SK-N-SH (cell line): ENCODE measurements at regions of chr5 and their contacts with region 1.

Region 1: GRCh38 chr5:32585446-32586275 is at the start of gene SUB1:
- DNase-seq: peak; percentile 96
- H3K4me3 ChIP-seq: peak within 1 kb of the TSS; percentile 78
- H3K27ac ChIP-seq: peak within 1 kb of the TSS; percentile 92 to 99
- H3K4me1 ChIP-seq: peaks cover 5 to 7% of the 10 kb centered on the region in 2 experiments; a peak in 3 of 4 replicates
- H3K27me3 ChIP-seq: no peaks in the 10 kb centered on the region
- CTCF ChIP-seq: peak; percentile 29; the same call in 1 of the 2 replicates
- EP300 ChIP-seq: no peak; a peak in 1 of 4 replicates
- RAD21 ChIP-seq: no peak
- polyA plus RNA-seq, gene SUB1: 50.8 and 55.4 TPM in 2 replicates

Region 2: GRCh38 chr5:32471784-32472183 is 113.9 kb before region 1 on chr5:
- CTCF ChIA-PET with region 1: interaction called, 20 read pairs
- POLR2A ChIA-PET with region 1: no interaction called
- DNase-seq: peak; percentile 21
- H3K4me3 ChIP-seq: no peak overlapping the region
- H3K27ac ChIP-seq: no peak overlapping the region
- H3K4me1 ChIP-seq: no peaks in the 10 kb centered on the region
- H3K27me3 ChIP-seq: no peaks in the 10 kb centered on the region; the same call in 1 of the 2 replicates
- CTCF ChIP-seq: no peak
- EP300 ChIP-seq: no peak
- RAD21 ChIP-seq: peak; percentile 61

Region 3: GRCh38 chr5:32482193-32482592 is 103.5 kb before region 1 on chr5:
- CTCF ChIA-PET with region 1: interaction called, 183 read pairs
- POLR2A ChIA-PET with region 1: no interaction called
- DNase-seq: no peak
- H3K4me3 ChIP-seq: no peak overlapping the region
- H3K27ac ChIP-seq: no peak overlapping the region
- H3K4me1 ChIP-seq: no peaks in the 10 kb centered on the region
- H3K27me3 ChIP-seq: no peaks in the 10 kb centered on the region
- CTCF ChIP-seq: no peak
- EP300 ChIP-seq: no peak
- RAD21 ChIP-seq: no peak

Region 4: DNA sequence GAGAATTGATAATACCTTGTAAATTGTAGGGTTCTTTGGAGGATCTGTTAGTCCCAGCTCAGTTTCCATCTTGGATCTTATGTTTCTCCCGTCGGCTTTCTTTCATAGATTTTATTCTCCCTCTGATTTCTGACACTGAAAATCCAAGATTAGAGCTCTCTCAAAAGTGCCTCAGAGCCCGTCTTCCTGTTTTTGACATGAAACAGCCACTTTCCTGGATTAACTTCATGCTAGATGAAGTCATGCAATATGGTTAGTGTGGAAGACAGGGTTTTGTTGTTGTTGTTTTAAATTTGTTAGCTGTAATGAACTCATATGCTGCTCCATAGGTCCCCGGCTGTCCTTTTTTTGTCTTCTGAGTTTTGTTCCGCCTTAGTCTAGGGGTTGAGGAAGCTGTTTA is 89.6 kb before region 1 on chr5:
- CTCF ChIA-PET with region 1: interaction called, 183 read pairs
- POLR2A ChIA-PET with region 1: no interaction called
- DNase-seq: no peak
- H3K4me3 ChIP-seq: no peak overlapping the region
- H3K27ac ChIP-seq: no peak overlapping the region
- H3K4me1 ChIP-seq: no peaks in the 10 kb centered on the region
- H3K27me3 ChIP-seq: no peaks in the 10 kb centered on the region
- CTCF ChIP-seq: no peak
- EP300 ChIP-seq: no peak
- RAD21 ChIP-seq: no peak

Region 5: DNA sequence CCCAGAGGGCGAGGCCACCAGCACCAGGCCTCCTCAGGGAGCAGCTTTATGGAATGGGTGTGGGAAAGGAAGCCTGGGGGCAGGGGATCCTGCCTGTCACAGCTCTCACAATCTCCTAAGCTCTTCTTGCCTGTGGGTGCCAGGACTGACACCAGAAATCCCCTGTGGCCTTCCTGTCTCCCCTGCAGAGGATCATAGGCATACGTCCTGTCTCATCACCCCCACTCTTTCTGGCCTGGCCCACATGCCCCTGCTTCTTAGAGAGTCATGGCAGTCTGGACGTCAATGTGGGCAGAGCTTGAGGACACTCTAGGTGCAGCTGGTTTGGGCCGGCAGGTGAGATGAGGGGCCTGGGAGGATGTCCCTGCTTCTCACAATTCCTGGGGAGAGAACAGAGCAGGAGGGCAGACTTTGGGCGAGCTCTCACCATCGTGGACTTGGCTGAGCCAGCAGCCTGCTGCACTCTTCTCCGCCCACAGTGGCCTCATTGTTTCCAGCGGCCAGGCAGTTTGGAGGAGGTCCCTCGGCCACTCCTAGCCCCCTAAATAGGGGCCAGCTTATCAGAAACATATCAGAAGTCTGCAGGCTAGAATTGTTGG is 73.8 kb before region 1 on chr5:
- CTCF ChIA-PET with region 1: interaction called, 13 read pairs
- POLR2A ChIA-PET with region 1: no interaction called
- DNase-seq: no peak
- H3K4me3 ChIP-seq: no peak overlapping the region
- H3K27ac ChIP-seq: no peak overlapping the region
- H3K4me1 ChIP-seq: peaks cover 5 to 9% of the 10 kb centered on the region in 2 experiments; a peak in 3 of 4 replicates
- H3K27me3 ChIP-seq: no peaks in the 10 kb centered on the region
- CTCF ChIP-seq: no peak
- EP300 ChIP-seq: no peak
- RAD21 ChIP-seq: no peak

Region 6: GRCh38 chr5:32531885-32532520 is 53.7 kb before region 1 on chr5:
- CTCF ChIA-PET with region 1: interaction called, 16 read pairs
- POLR2A ChIA-PET with region 1: no interaction called
- DNase-seq: no peak
- H3K4me3 ChIP-seq: peak overlapping the region in 1 of 2 experiments; percentile 6; a peak in 1 of 4 replicates
- H3K27ac ChIP-seq: peak overlapping the region; percentile 68 to 80
- H3K4me1 ChIP-seq: peaks cover 0 to 12% of the 10 kb centered on the region in 2 experiments; a peak in 3 of 4 replicates
- H3K27me3 ChIP-seq: no peaks in the 10 kb centered on the region
- CTCF ChIP-seq: no peak
- EP300 ChIP-seq: no peak
- RAD21 ChIP-seq: no peak

Region 7: DNA sequence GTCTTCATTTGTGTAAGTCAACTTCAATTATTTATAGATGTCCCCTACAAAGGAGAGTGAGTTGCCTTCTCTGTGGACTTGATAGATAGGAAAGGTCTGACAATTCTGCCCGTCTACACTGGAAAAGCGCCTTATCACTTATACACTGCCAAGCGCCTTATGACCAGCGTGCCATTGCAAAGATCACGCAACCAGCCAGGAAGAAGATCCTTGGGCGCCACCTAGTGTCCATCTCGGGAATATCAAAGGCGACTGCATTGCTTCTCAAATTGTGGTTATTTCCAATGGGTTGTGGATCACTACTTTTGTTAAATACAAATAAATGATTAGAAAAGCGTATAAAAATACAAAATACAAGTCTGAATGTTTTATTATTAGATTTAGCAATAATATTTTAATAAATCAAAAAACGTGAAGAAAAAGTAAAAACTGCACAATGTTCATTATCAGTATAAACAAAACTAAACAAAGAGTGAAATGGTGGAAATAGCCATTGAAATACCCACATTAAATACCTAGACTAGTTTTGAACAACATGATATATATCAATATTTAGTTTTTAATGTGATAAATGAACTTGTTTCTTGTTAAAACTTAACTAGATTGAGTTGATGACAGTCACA is 27.5 kb after region 1 on chr5:
- CTCF ChIA-PET with region 1: interaction called, 16 read pairs
- POLR2A ChIA-PET with region 1: no interaction called
- DNase-seq: peak; percentile 75
- H3K4me3 ChIP-seq: peak overlapping the region in 1 of 2 experiments; percentile 20; a peak in 1 of 4 replicates
- H3K27ac ChIP-seq: 0 out of 4 replicates have a peak overlapping the region, but pooled peaks of 1 of the 2 experiments have one; percentile 6
- H3K4me1 ChIP-seq: peaks cover 0 to 3% of the 10 kb centered on the region in 2 experiments; a peak in 2 of 4 replicates
- H3K27me3 ChIP-seq: no peaks in the 10 kb centered on the region
- CTCF ChIP-seq: peak; percentile 94
- EP300 ChIP-seq: no peak
- RAD21 ChIP-seq: peak; percentile 95

Region 8: GRCh38 chr5:32642276-32643002 is 56.8 kb after region 1 on chr5:
- CTCF ChIA-PET with region 1: no interaction called
- POLR2A ChIA-PET with region 1: no interaction called
- DNase-seq: no peak
- H3K4me3 ChIP-seq: no peak overlapping the region
- H3K27ac ChIP-seq: peak overlapping the region in 1 of 2 experiments; percentile 12; a peak in 1 of 4 replicates
- H3K4me1 ChIP-seq: no peaks in the 10 kb centered on the region; a peak in 1 of 4 replicates
- H3K27me3 ChIP-seq: no peaks in the 10 kb centered on the region
- CTCF ChIP-seq: no peak
- EP300 ChIP-seq: no peak
- RAD21 ChIP-seq: no peak

Region 9: GRCh38 chr5:32859211-32859641 is 273.6 kb after region 1 on chr5:
- CTCF ChIA-PET with region 1: no interaction called
- POLR2A ChIA-PET with region 1: no interaction called
- DNase-seq: no peak
- H3K4me3 ChIP-seq: no peak overlapping the region
- H3K27ac ChIP-seq: no peak overlapping the region
- H3K4me1 ChIP-seq: peaks cover 0 to 1% of the 10 kb centered on the region in 2 experiments; a peak in 1 of 4 replicates
- H3K27me3 ChIP-seq: no peaks in the 10 kb centered on the region
- CTCF ChIP-seq: no peak
- EP300 ChIP-seq: no peak
- RAD21 ChIP-seq: no peak